Activated naive CD4-positive, alpha-beta T cell treated with anti-CD3 and anti-CD28 coated beads for 36 hours (primary cell): ENCODE measurements at regions of chr2 and their contacts with region 1.

Region 1: GRCh38 chr2:112726497-112727190 is 5.8 kb downstream of the NT5DC4 start:
- DNase-seq: peak; percentile 93
- H3K4me3 Mint-ChIP-seq: no peak overlapping the region
- H3K27ac Mint-ChIP-seq: no peak overlapping the region
- H3K4me1 Mint-ChIP-seq: peaks cover 4% of the 10 kb centered on the region
- H3K27me3 Mint-ChIP-seq: no peaks in the 10 kb centered on the region

Region 2: DNA sequence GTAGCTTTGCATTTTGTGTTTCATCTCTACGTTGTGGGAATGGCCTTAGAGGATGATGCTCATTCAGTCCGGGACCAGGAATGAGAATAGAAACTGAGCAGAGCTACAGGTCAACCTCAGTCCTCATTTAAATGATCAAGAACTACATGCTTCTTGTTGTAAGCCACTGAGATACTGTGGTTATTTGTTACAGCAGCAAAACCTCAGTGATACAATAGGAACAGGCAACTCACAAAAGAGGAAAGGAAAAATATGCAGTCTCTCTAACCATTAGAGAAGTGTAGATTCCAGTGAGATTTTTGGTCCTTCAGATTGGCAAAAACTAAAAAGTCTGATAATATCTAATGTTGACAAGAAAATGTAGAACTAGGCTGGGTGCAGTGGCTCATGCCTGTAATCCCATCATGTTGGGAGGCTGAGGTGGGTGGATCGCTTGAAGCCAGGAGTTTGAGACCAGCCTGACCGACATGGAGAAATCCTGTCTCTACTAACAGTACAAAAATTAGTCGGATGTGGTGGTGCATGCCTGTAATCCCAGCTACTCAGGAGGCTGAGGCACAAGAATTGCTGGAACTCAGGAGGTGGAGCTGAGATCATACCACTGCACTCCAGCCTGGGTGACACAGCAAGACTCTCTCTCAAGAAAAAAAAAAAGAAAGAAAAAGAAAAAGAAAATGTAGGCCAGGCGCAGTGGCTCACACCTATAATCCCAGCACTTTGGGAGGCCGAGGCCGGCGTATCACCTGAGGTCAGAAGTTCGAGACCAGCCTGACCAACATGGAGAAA is 128.9 kb before region 1 on chr2:
- CTCF ChIA-PET with region 1: interaction called, 146 read pairs
- intact Hi-C with region 1: loop called (anchors 1 kb)
- DNase-seq: no peak
- H3K4me3 Mint-ChIP-seq: no peak overlapping the region
- H3K27ac Mint-ChIP-seq: no peak overlapping the region
- H3K4me1 Mint-ChIP-seq: peaks cover 4% of the 10 kb centered on the region
- H3K27me3 Mint-ChIP-seq: no peaks in the 10 kb centered on the region

Region 3: DNA sequence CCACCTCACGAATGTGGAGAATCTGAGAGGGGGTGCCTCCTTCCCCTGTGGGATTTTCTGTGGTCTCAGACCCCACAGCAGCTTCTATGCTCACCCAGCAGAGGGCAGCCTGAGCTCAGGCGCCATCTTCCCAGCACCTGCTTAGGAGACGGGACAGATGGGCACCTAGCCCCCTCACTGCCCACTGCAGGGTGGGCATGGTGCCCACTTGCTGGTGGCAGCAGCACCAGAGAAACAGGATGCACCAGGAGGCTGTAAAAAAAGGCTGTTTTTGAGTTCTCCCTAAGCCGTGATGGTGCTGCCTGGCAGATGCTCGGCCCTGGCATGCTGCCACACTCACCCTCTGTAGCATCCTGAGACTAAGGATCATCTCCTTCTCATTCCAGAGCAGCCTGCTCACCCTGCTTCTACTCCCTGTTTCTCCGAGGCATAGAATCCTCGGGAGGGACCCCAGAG is 100.0 kb before region 1 on chr2:
- CTCF ChIA-PET with region 1: interaction called, 160 read pairs
- intact Hi-C with region 1: loop called (anchors 1 kb)
- DNase-seq: peak; percentile 77
- H3K4me3 Mint-ChIP-seq: peak overlapping the region; percentile 47
- H3K27ac Mint-ChIP-seq: peak overlapping the region; percentile 76
- H3K4me1 Mint-ChIP-seq: peaks cover 63% of the 10 kb centered on the region
- H3K27me3 Mint-ChIP-seq: no peaks in the 10 kb centered on the region

Region 4: DNA sequence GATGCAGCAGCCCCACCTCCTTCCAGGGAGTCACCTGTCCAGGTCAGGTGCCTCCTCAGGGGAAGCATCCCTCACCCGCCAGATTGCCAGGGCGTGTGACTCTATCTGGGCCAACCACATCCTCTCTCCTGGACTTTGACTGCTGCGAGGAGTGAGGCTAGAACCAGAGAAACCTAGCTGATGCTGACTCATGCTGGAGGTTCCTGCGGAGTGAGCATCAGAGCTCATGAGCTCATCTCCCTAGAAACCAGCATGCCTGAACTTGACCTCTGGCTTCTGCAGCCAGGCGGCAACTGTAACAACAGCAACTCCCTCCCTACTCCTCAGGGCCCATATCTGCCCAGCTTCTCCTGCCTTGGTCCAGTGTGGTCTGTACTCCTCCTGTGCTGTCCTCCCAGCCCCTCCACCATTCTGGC is 34.1 kb before region 1 on chr2:
- CTCF ChIA-PET with region 1: interaction called, 35 read pairs
- intact Hi-C with region 1: loop called (anchors 1 kb)
- DNase-seq: peak; percentile 89
- H3K4me3 Mint-ChIP-seq: peak overlapping the region; percentile 4
- H3K27ac Mint-ChIP-seq: peak overlapping the region; percentile 80
- H3K4me1 Mint-ChIP-seq: peaks cover 29% of the 10 kb centered on the region
- H3K27me3 Mint-ChIP-seq: no peaks in the 10 kb centered on the region

Region 5: DNA sequence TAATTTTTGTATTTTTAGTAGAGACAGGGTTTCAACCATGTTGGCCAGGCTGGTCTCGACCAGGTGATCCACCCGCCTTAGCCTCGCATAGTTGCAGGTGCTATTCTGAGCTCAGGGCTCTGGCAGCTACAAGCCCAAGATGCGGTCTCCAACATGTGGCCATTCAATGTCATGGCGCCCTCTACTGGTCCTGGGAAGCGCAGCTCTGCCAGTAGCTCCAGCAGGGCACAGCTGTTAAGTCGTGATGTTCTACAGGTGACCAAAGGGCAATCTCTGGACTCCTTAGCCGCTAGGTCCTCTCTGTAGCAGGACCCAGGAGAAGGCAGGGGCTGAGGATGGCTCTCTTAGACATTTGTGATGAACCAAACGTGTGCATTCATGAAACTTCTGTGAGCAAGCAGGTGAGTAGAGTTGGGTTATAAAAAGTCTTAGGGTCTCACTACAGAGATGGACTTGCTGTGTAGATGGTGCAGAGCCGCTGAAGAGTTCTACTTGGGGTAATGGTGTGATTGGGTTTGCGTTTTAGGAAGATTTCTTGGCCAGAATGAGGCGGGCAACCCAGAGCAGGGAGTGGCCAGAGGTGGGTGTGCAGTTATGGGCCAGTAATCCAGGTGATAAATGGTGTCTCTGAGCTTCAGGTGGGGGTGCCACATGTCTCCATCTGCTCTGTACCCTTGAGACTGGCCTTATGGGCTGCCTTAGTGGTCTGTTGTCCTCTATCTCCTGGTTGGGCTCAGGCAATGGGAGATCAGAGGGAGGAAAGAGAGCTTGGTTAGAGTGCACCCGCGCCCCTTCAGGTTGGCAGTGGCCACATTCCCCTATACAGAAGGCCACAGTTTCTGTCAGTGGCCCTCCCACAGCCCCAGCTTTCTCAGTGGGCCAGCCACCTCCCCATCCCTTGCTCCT is 215.4 kb after region 1 on chr2:
- CTCF ChIA-PET with region 1: interaction called, 13 read pairs
- intact Hi-C with region 1: no loop called
- DNase-seq: peak; percentile 88
- H3K4me3 Mint-ChIP-seq: no peak overlapping the region
- H3K27ac Mint-ChIP-seq: no peak overlapping the region
- H3K4me1 Mint-ChIP-seq: no peaks in the 10 kb centered on the region
- H3K27me3 Mint-ChIP-seq: no peaks in the 10 kb centered on the region